ENCODE measurements at regions of chr15 and their contacts with region 1.

Region 1: GRCh38 chr15:60507596-60508424 is 28.9 kb upstream of the ICE2 start:
- DNase-seq: peak; percentile 75
- ATAC-seq: peak; percentile 80
- H3K4me3 Mint-ChIP-seq: peak overlapping the region; percentile 19
- H3K27ac Mint-ChIP-seq: peak overlapping the region; percentile 84
- H3K4me1 Mint-ChIP-seq: peaks cover 42% of the 10 kb centered on the region
- H3K27me3 Mint-ChIP-seq: no peaks in the 10 kb centered on the region

Region 2: DNA sequence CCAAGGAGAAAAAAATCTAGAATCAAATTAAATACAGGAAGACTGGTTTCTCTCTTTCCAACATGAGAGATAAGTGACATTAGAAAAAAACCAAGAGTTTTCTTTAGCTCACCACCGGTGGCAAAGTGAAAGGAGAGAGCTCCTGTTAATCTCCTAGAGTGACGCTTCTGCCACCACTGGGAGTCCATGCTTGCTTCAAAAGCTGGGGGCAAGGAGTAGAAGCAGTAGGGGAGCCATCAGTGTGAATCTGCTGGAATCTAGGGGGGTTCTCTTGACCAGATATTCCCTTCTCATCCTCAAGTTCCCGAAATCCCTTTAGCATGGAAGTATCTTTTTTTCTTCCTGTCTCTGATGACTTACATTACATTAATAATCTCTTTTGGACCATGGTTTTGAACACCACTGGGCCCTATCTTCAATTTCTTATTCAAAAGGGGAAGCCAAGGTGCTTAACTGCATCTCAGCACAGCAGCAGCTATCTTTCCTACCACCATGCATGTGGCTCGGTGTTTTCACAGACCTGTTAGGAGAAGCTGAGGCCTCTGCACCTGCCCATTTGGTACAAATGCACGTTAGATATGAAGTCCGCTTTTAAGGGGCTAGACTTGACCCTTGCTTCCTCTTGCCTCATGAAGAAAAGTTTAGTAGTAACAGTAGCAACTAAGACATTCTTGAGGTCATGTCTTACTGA is 22.3 kb before region 1 on chr15:
- CTCF ChIA-PET with region 1: interaction called, 10 read pairs
- POLR2A ChIA-PET with region 1: no interaction called
- DNase-seq: no peak
- ATAC-seq: no peak
- H3K4me3 Mint-ChIP-seq: no peak overlapping the region
- H3K27ac Mint-ChIP-seq: no peak overlapping the region
- H3K4me1 Mint-ChIP-seq: peaks cover 40% of the 10 kb centered on the region
- H3K27me3 Mint-ChIP-seq: no peaks in the 10 kb centered on the region

Region 3: DNA sequence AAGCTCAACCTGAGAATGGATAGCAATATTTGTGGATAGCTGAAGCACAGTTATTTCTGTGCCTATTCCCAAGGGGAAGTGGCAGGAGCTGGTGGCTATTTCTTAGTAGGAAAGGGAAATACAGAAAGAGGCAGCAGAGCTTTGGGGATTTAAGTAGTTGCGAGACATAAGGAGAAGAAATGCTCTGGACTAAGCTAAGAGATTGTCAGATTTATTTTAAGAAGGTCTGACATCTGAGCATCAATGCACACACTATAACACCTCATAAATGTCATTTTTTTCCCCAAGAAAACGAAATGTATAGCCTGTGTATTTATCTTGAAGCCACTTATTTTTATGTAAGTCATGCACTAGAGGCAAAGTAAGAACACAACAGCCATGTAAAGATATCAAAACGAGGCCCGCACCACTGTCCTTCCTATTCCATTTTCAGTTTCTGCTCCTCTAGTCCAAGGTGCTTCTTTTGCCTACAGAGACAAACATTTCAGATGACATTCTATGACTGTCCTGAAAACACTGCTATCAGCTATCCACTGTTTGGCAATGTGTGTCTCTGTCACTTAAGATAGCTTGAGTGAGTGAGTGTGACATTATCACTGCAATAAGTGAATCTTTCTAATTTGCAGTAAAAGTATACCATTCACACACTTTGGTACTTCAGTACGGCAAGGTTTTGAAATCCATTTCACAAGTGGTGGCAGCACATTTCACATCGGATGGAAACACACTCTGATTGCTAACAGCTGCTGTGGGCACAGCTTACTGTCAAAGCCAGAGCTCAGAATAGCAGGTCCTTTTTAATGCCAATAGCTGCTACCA is 33.9 kb after region 1 on chr15:
- CTCF ChIA-PET with region 1: interaction called, 12 read pairs
- POLR2A ChIA-PET with region 1: no interaction called
- DNase-seq: no peak
- ATAC-seq: no peak
- H3K4me3 Mint-ChIP-seq: no peak overlapping the region
- H3K27ac Mint-ChIP-seq: peak overlapping the region; percentile 44
- H3K4me1 Mint-ChIP-seq: peaks cover 86% of the 10 kb centered on the region
- H3K27me3 Mint-ChIP-seq: no peaks in the 10 kb centered on the region

Region 4: GRCh38 chr15:60592371-60593169 is 84.8 kb after region 1 on chr15:
- CTCF ChIA-PET with region 1: interaction called, 11 read pairs
- POLR2A ChIA-PET with region 1: no interaction called
- DNase-seq: peak; percentile 90
- ATAC-seq: peak; percentile 89
- H3K4me3 Mint-ChIP-seq: peak overlapping the region; percentile 82
- H3K27ac Mint-ChIP-seq: peak overlapping the region; percentile 83
- H3K4me1 Mint-ChIP-seq: peaks cover 58% of the 10 kb centered on the region
- H3K27me3 Mint-ChIP-seq: no peaks in the 10 kb centered on the region